CD8-positive, alpha-beta T cell (primary cell): ENCODE measurements at regions of chr7 and their contacts with region 1.

Region 1: DNA sequence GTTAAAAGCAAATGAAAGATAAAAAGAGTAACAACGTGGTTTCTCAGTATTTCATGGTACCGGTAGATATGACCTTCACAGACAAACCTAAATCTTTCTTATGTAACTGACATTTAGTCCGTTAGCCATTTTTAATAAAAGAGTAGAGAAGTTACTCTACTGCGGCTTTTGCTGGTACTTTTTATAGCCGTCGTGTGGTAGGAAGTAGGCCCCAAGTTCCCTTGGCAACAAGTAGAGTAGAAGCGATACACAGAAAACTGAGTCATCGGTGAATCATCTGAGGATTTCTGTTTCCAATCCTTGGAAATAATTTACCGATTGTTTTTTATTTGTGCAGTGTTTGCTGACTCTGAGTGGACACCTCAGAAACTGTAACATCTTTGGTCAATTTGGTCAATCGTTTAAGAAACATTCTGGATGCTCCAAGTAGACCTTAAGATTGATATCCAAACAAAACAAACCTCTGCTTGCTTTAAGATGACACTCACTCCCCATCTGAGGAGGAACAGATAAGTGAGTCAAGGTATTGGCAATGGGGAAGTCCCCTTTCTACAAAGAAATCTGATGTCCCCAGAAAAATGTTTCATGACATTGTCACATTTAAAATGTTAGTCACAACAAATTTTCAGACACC is 63.9 kb upstream of the AHR start:
- DNase-seq: peak; percentile 22 to 93 (median 59)
- ATAC-seq: peak; percentile 81
- H3K4me3 ChIP-seq: peak overlapping the region; percentile 11 to 19
- H3K4me3 Mint-ChIP-seq: peak overlapping the region; percentile 67
- H3K27ac ChIP-seq: peak overlapping the region; percentile 62 to 93
- H3K27ac Mint-ChIP-seq: peak overlapping the region; percentile 96
- H3K4me1 ChIP-seq: peaks cover 24% of the 10 kb centered on the region
- H3K4me1 Mint-ChIP-seq: peaks cover 28% of the 10 kb centered on the region
- H3K27me3 ChIP-seq: no peaks in the 10 kb centered on the region
- H3K27me3 Mint-ChIP-seq: no peaks in the 10 kb centered on the region
- CTCF ChIP-seq: no peak

Region 2: GRCh38 chr7:17144322-17144721 is 90.2 kb before region 1 on chr7:
- CTCF ChIA-PET with region 1: no interaction called
- POLR2A ChIA-PET with region 1: no interaction called
- intact Hi-C with region 1: loop called (anchors 2 to 5 kb)
- DNase-seq: peak in 8 of 9 experiments; percentile 25 to 68 (median 50)
- ATAC-seq: peak; percentile 76
- H3K4me3 ChIP-seq: no peak overlapping the region
- H3K4me3 Mint-ChIP-seq: peak overlapping the region; percentile 62
- H3K27ac ChIP-seq: no peak overlapping the region
- H3K27ac Mint-ChIP-seq: peak overlapping the region; percentile 53
- H3K4me1 ChIP-seq: peaks cover 26% of the 10 kb centered on the region
- H3K4me1 Mint-ChIP-seq: peaks cover 43% of the 10 kb centered on the region
- H3K27me3 ChIP-seq: no peaks in the 10 kb centered on the region
- H3K27me3 Mint-ChIP-seq: no peaks in the 10 kb centered on the region
- CTCF ChIP-seq: no peak

Region 3: DNA sequence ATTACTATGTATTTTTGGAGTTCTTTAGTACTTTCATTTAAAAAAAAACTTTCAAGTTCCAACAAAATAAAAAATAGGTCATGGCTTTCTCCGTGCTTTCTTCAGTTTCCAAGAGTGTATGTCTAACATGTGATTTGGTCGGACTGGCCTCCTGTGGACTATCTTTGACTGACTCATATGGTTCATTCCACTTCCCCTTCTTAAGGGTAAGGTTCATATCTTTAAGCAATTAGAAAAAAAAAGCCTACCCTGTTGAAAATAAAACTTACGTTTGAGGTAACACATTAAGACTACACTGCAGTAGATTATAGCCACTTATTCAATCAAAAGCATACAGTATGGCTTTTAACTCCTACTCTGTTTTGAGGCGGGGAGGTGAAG is 48.8 kb before region 1 on chr7:
- CTCF ChIA-PET with region 1: no interaction called
- POLR2A ChIA-PET with region 1: no interaction called
- intact Hi-C with region 1: loop called in 1 of 2 experiments (anchors 5 kb)
- DNase-seq: peak in 2 of 9 experiments; percentile 4 to 18
- ATAC-seq: no peak
- H3K4me3 ChIP-seq: no peak overlapping the region
- H3K4me3 Mint-ChIP-seq: no peak overlapping the region
- H3K27ac ChIP-seq: no peak overlapping the region
- H3K27ac Mint-ChIP-seq: no peak overlapping the region
- H3K4me1 ChIP-seq: no peaks in the 10 kb centered on the region
- H3K4me1 Mint-ChIP-seq: peaks cover 3% of the 10 kb centered on the region
- H3K27me3 ChIP-seq: no peaks in the 10 kb centered on the region
- H3K27me3 Mint-ChIP-seq: no peaks in the 10 kb centered on the region
- CTCF ChIP-seq: no peak

Region 4: DNA sequence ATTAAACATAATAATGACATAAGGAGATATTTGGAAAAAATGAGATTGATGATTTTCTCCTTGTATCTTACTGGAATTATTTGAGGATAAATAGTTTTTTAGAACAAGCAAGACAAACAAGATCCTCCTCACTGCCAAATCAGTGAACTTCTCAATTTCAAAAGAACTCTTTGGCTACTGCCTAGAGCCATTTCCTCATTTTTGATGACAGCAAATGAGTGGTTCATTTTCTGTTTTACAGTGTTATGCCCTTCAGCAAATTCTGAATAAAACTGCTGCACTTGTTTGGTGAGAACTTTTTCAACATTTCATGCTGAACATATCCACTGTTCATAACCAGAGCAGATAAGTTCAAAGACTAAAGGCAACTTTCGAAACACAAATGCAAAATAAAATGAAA is 21.4 kb after region 1 on chr7:
- CTCF ChIA-PET with region 1: no interaction called
- POLR2A ChIA-PET with region 1: no interaction called
- intact Hi-C with region 1: loop called in 1 of 2 experiments (anchors 2 kb)
- DNase-seq: no peak
- ATAC-seq: no peak
- H3K4me3 ChIP-seq: no peak overlapping the region
- H3K4me3 Mint-ChIP-seq: no peak overlapping the region
- H3K27ac ChIP-seq: no peak overlapping the region
- H3K27ac Mint-ChIP-seq: no peak overlapping the region
- H3K4me1 ChIP-seq: no peaks in the 10 kb centered on the region
- H3K4me1 Mint-ChIP-seq: no peaks in the 10 kb centered on the region
- H3K27me3 ChIP-seq: no peaks in the 10 kb centered on the region
- H3K27me3 Mint-ChIP-seq: no peaks in the 10 kb centered on the region
- CTCF ChIP-seq: no peak

Region 5: DNA sequence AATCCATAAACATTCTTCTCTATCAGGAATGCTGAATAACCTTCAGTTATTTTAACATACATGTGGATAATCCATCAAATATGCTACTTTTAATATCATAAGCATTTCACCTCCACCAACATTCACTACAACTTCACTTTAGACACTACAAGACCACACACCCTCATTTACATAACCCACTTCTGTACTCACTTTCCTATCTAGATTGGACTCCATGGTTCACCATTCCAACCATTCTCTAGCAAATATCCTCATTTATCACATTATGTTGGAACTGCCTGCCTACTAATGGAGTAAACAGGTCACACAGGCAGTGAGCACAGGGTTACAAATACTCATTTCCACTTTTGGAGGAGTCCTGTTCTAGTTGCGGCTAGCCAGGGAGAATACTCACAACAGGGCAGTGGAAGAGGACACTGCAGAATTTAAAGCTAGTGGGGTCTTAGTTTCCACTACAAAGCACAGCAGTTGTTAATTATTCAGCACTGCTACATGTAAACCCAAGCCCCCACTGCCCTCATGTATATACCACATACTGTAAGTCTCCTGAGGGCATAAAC is 687.4 kb after region 1 on chr7:
- CTCF ChIA-PET with region 1: no interaction called
- POLR2A ChIA-PET with region 1: no interaction called
- intact Hi-C with region 1: no loop called
- DNase-seq: no peak
- ATAC-seq: no peak
- H3K4me3 ChIP-seq: no peak overlapping the region
- H3K4me3 Mint-ChIP-seq: no peak overlapping the region
- H3K27ac ChIP-seq: no peak overlapping the region
- H3K27ac Mint-ChIP-seq: no peak overlapping the region
- H3K4me1 ChIP-seq: peaks cover 19% of the 10 kb centered on the region
- H3K4me1 Mint-ChIP-seq: peaks cover 70% of the 10 kb centered on the region
- H3K27me3 ChIP-seq: no peaks in the 10 kb centered on the region
- H3K27me3 Mint-ChIP-seq: no peaks in the 10 kb centered on the region
- CTCF ChIP-seq: no peak